Left lung (tissue), 14 donors: ENCODE measurements at regions of chr9 and their contacts with region 1.

Region 1: DNA sequence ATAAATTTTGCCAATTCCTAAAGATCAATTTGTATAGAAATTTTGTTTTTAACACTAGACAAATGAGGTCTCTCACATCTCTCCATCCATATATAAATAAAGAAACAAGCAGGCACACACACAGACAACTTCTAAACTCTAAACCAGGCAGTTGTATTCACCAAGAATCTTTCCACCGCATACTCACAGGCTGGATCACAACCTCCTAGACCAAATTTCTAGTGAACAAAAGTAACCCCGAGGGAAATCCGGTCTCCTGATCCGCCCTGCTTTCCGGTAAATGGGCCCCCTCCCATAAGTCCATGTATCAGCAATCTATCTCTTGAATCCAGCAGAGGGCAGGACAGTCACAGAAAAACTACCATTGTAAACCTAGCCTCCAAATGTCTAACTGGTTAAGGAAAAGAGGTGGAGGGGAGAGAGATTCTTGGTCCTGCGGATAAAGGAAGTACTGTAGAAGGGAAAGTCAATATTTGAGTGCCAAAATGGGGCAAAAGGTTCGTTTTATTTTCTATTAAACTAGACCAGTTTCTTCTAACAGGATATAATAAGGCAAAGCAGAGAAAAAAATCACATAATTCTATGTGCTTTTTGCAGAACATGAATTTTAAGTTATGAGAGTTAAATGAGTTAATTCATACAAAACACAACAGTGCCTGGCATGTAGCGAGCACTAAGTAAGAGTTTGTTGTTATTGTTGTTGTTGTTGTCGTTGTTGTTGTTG is 4.8 kb upstream of the SMU1 start:
- DNase-seq: peak in 2 of 4 donors; percentile 76 to 90
- ATAC-seq: peak; percentile 75
- H3K4me3 ChIP-seq: no peak overlapping the region
- H3K27ac ChIP-seq: peak overlapping the region; percentile 23 to 57
- H3K4me1 ChIP-seq: peaks cover 5 to 27% of the 10 kb centered on the region in 2 donors
- H3K27me3 ChIP-seq: no peaks in the 10 kb centered on the region
- CTCF ChIP-seq: peak; percentile 51 to 72

Region 2: GRCh38 chr9:33170464-33171415 is 89.5 kb after region 1 on chr9:
- intact Hi-C with region 1: loop called in 1 of 2 experiments (anchors 10 kb)
- DNase-seq: peak in 2 of 4 donors; percentile 56 to 70
- ATAC-seq: no peak
- H3K4me3 ChIP-seq: no peak overlapping the region
- H3K27ac ChIP-seq: peak overlapping the region in 1 of 2 donors; percentile 23
- H3K4me1 ChIP-seq: peaks cover 5 to 46% of the 10 kb centered on the region in 2 donors
- H3K27me3 ChIP-seq: no peaks in the 10 kb centered on the region
- CTCF ChIP-seq: peak; percentile 22 to 26

Region 3: GRCh38 chr9:33225319-33226149 is 144.2 kb after region 1 on chr9:
- intact Hi-C with region 1: loop called in 1 of 2 experiments (anchors 10 kb)
- DNase-seq: peak in 2 of 4 donors; percentile 70 to 83
- ATAC-seq: peak; percentile 50
- H3K4me3 ChIP-seq: no peak overlapping the region
- H3K27ac ChIP-seq: peak overlapping the region in 1 of 2 donors; percentile 89
- H3K4me1 ChIP-seq: peaks cover 0 to 34% of the 10 kb centered on the region in 2 donors
- H3K27me3 ChIP-seq: no peaks in the 10 kb centered on the region
- CTCF ChIP-seq: peak; percentile 63 to 68

Region 4: GRCh38 chr9:33272061-33272460 is 190.8 kb after region 1 on chr9:
- intact Hi-C with region 1: no loop called
- DNase-seq: no peak
- ATAC-seq: no peak
- H3K4me3 ChIP-seq: no peak overlapping the region
- H3K27ac ChIP-seq: no peak overlapping the region
- H3K4me1 ChIP-seq: peaks cover 0 to 7% of the 10 kb centered on the region in 2 donors
- H3K27me3 ChIP-seq: no peaks in the 10 kb centered on the region
- CTCF ChIP-seq: no peak